HAP-1 (cell line): ENCODE measurements at regions of chr15 and their contacts with region 1.

Region 1: DNA sequence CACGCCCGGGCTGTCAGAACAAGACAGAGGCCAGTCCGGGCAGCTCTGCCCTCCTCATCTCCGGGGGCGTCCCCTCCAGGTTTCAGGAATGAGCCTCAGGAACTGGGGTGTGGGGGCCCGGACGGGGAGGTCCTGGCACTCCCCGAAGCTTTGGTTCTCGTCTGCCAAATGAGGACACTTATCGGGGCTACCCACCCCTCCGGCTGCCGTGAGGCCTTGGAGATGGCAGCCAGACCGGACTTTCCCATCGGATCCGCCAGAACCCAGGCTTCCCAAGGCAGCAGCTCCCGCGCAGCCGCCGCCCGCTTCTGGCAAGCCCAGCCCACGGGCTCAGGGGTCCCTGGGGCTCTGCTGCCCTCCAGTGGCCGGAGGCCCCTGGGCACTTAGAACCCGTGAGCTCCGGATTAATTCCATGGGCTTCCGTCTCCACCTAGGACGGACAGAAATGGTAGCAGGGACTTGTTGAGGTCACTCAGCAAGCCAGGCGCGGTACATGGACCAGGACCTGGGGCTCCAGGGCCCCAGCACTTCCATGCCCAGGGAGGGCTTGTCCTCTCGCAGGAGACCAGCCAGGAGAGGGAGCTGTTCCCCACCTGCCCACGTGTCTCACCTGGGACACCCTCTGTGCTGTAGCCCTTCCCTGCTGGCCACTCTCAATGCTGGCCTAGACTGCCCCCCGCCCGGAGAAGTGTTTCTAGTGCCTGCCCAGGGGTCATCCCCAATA is 89.4 kb downstream of the LINGO1 start:
- DNase-seq: peak; percentile 95 to 96
- H3K4me3 ChIP-seq: peak overlapping the region; percentile 44
- H3K4me1 ChIP-seq: peaks cover 8% of the 10 kb centered on the region
- H3K27me3 ChIP-seq: peaks cover 12% of the 10 kb centered on the region

Region 2: DNA sequence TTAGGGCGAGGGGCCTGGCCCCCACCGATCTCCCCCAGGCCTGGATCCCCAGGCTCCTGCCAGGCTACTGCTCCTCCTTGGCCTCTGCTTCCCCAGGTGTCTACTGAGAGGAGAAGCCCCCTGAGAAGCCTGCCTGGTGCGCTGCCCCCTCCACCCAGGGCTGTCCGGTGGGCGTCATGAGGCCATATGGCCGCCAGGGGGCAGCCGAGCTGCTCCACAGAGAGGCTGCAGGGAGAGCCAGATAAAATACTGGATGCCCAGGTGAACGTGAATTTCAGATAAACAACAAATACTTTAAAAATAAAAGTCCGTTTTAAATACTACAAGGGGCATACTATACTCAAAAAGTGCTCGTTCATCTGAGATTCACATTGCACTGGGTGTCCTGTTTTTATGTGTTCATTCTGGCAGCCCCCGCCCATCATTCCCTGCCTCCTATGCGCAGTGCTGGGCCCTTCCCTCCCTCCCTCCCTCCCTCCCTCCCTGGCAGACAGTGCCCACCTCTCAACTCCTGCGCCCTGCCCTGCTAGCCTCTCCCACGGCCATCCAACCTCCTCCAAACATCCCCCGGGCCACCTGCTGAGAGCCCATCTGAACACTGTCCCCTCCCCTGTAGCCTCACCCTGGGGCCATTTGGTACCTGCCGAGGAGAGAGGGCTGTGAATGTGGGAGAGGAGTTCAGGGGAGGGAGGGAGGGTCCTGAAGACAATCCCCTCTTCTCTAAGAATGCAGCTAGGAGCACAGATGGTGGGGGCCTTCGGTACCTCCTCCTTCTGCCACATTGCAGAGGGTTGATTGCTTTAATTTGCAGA is 518.8 kb before region 1 on chr15:
- in situ Hi-C with region 1: loop called (anchors 10 kb)
- DNase-seq: peak; percentile 75 to 93
- H3K4me3 ChIP-seq: no peak overlapping the region
- H3K4me1 ChIP-seq: no peaks in the 10 kb centered on the region
- H3K27me3 ChIP-seq: no peaks in the 10 kb centered on the region

Region 3: GRCh38 chr15:77107531-77108355 is 435.6 kb before region 1 on chr15:
- in situ Hi-C with region 1: loop called (anchors 5 kb)
- DNase-seq: peak; percentile 79 to 84
- H3K4me3 ChIP-seq: no peak overlapping the region
- H3K4me1 ChIP-seq: no peaks in the 10 kb centered on the region
- H3K27me3 ChIP-seq: no peaks in the 10 kb centered on the region

Region 4: DNA sequence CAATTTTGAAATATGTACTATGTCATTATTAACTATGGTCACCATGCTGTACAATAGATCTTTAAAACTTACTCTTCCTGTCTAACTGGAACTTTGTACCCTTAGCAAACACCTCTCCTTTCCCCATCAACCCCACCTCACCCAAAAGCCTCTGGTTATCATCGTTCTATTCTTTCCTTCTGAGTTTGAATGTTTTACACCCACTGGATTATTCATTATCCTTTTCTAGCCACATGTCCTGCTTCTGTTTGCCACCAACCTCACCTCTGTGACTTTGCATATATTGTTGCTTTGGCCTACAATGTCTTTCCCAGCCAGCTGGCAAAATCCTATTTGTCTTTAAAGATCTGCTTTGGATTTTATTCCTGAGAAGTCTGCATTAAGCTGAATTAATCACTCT is 369.8 kb before region 1 on chr15:
- in situ Hi-C with region 1: no loop called
- DNase-seq: no peak
- H3K4me3 ChIP-seq: no peak overlapping the region
- H3K4me1 ChIP-seq: no peaks in the 10 kb centered on the region
- H3K27me3 ChIP-seq: no peaks in the 10 kb centered on the region